PC-9 (cell line): ENCODE measurements at regions of chr9 and their contacts with region 1.

Region 1: DNA sequence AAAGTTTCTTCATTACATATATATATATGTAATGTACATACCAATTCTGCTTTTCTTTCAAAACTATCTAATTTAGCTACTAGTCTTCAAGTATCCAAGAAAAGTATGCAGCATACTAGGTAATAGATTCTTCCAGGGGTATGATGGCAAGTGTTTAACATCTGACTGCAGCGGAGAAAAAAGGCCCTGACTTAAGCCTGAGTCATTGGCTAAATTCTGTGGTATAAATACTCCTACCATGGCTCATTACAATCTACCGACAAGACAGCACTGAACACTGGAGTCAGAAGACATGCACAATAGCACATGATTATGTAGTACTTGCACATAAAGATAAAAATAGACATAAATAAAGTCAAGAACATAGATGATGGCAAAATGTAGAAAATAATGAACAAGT is 439.9 kb downstream of the BRINP1 start:
- DNase-seq: no peak
- H3K4me3 ChIP-seq: no peak overlapping the region
- H3K27ac ChIP-seq: no peak overlapping the region
- H3K4me1 ChIP-seq: no peaks in the 10 kb centered on the region
- H3K27me3 ChIP-seq: no peaks in the 10 kb centered on the region
- CTCF ChIP-seq: no peak

Region 2: DNA sequence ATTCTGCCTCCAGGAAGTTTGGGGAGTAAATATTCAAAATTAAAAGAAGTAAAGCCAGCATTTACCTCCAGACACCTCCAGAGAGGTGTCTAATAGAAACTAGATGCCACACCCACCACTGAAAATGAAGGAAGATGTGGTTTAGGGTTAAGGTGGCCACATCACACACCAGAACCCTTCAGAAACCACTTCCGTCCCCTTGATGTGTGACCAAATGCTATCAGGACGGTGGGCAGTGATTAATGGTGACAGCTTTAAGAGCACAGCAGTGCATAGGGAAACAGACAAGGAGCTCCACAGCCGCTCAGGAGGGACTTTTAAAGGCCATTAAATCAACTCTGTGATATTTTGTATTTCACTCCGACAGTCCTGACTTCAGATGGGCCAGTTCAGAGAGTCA is 144.7 kb after region 1 on chr9:
- CTCF ChIA-PET with region 1: no interaction called
- POLR2A ChIA-PET with region 1: no interaction called
- intact Hi-C with region 1: no loop called
- DNase-seq: no peak
- H3K4me3 ChIP-seq: no peak overlapping the region
- H3K27ac ChIP-seq: no peak overlapping the region
- H3K4me1 ChIP-seq: no peaks in the 10 kb centered on the region
- H3K27me3 ChIP-seq: no peaks in the 10 kb centered on the region
- CTCF ChIP-seq: no peak

Region 3: DNA sequence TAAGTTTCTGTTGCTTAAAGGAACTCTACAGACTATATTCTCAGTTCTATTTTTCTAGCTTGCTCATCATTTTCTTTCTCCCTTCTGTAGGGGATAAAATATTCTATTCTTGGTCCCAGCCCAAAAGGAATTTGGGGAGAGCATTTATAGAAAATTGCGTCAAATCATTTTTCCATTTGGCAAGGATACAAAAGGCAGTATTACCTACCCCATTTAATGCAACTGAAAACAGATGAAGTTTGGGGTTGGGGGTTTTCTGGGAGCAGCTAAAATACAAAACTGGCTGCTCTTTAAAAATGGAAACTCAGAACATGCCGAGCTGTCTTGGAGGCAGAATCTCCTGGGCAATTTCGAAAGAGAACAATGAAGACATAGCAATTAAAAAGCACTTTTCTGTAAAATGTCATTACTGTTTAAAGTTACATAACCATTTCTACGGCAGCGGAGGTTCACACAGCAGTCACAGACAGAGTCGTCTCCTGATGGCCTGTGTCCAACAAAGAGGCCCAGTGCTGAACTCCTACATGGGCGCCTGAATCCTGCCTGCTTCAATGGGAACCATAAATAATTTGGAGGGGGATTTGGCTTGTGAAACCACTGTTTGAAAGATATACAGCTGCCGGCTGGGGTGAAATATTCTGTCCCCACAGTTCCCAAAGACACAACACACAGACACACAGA is 287.5 kb after region 1 on chr9:
- CTCF ChIA-PET with region 1: no interaction called
- POLR2A ChIA-PET with region 1: no interaction called
- intact Hi-C with region 1: loop called (anchors 5 kb)
- DNase-seq: no peak
- H3K4me3 ChIP-seq: no peak overlapping the region
- H3K27ac ChIP-seq: no peak overlapping the region
- H3K4me1 ChIP-seq: no peaks in the 10 kb centered on the region
- H3K27me3 ChIP-seq: no peaks in the 10 kb centered on the region
- CTCF ChIP-seq: no peak